CD8-positive, alpha-beta memory T cell (primary cell): ENCODE measurements at regions of chr17 and their contacts with region 1.

Region 1: GRCh38 chr17:45277216-45277849 is 15.4 kb upstream of the SPATA32 start:
- DNase-seq: peak; percentile 76 to 92 (median 83)
- H3K4me3 ChIP-seq: no peak overlapping the region
- H3K4me3 Mint-ChIP-seq: no peak overlapping the region
- H3K27ac ChIP-seq: no peak overlapping the region
- H3K27ac Mint-ChIP-seq: peak overlapping the region in 6 of 8 donors; percentile 0 to 72 (median 38)
- H3K4me1 ChIP-seq: no peaks in the 10 kb centered on the region
- H3K4me1 Mint-ChIP-seq: peaks cover 4 to 16% (median 11%) of the 10 kb centered on the region in 3 donors
- H3K27me3 ChIP-seq: no peaks in the 10 kb centered on the region
- H3K27me3 Mint-ChIP-seq: no peaks in the 10 kb centered on the region

Region 2: DNA sequence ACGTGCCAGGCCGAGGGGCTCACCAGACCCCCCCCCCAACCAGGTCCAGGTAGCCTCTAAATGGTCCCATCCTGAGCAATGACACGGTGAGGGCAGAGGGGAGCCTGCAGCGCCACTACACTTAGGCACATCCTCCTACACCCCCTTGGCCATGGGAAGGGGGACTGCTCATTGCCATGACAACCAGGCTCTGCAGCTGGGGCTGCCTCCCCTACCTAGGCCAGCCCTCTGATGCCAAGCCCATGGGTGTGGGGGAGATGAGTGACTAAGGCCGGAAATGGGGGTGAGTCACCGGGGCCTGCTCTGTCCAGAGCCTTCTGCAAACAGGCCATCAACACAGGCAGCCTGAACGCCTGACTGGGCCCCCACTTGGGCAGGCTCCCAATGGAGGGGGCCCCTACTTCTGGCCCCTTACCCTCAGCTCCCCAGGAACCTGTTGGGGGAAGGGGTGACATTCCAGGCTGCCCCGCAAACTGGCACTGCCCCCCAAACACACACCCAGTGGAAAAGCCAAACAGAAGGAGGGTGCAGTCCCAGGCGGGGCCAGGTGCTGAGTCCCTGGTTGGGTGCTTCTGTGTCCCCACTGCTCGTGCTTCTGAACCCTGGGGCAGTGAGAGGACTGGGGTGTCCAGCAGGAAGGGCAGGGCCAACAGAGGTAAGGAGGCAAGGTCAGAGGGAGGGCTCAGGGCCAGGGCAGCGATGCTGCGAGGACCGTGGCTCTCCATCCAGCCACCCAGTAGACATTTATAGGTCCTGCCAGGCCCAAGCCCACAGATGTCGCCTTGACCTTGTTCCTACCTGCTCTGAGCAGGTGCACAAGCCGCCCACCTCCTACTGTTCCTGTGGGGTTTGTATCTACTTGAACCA is 153.2 kb before region 1 on chr17:
- CTCF ChIA-PET with region 1: no interaction called
- POLR2A ChIA-PET with region 1: no interaction called
- DNase-seq: peak in 1 of 5 donors; percentile 68
- H3K4me3 ChIP-seq: no peak overlapping the region
- H3K4me3 Mint-ChIP-seq: no peak overlapping the region
- H3K27ac ChIP-seq: no peak overlapping the region
- H3K27ac Mint-ChIP-seq: peak overlapping the region in 1 of 8 donors; percentile 55
- H3K4me1 ChIP-seq: no peaks in the 10 kb centered on the region
- H3K4me1 Mint-ChIP-seq: peaks cover 0 to 3% (median 0%) of the 10 kb centered on the region in 3 donors
- H3K27me3 ChIP-seq: no peaks in the 10 kb centered on the region
- H3K27me3 Mint-ChIP-seq: no peaks in the 10 kb centered on the region

Region 3: GRCh38 chr17:45148183-45149036 is 128.9 kb before region 1 on chr17 and contains the start of gene HEXIM1:
- CTCF ChIA-PET with region 1: no interaction called
- POLR2A ChIA-PET with region 1: no interaction called
- DNase-seq: peak; percentile 97 to 100 (median 100)
- H3K4me3 ChIP-seq: peak within 1 kb of the TSS; percentile 91
- H3K4me3 Mint-ChIP-seq: peak within 1 kb of the TSS; percentile 90 to 99 (median 95)
- H3K27ac ChIP-seq: peak within 1 kb of the TSS; percentile 98
- H3K27ac Mint-ChIP-seq: peak within 1 kb of the TSS; percentile 97 to 100 (median 99)
- H3K4me1 ChIP-seq: peaks cover 43% of the 10 kb centered on the region
- H3K4me1 Mint-ChIP-seq: peaks cover 47 to 67% (median 61%) of the 10 kb centered on the region in 3 donors
- H3K27me3 ChIP-seq: no peaks in the 10 kb centered on the region
- H3K27me3 Mint-ChIP-seq: peaks cover 0 to 11% of the 10 kb centered on the region in 2 donors
- total RNA-seq, gene HEXIM1: 48.3 to 51.1 TPM

Region 4: DNA sequence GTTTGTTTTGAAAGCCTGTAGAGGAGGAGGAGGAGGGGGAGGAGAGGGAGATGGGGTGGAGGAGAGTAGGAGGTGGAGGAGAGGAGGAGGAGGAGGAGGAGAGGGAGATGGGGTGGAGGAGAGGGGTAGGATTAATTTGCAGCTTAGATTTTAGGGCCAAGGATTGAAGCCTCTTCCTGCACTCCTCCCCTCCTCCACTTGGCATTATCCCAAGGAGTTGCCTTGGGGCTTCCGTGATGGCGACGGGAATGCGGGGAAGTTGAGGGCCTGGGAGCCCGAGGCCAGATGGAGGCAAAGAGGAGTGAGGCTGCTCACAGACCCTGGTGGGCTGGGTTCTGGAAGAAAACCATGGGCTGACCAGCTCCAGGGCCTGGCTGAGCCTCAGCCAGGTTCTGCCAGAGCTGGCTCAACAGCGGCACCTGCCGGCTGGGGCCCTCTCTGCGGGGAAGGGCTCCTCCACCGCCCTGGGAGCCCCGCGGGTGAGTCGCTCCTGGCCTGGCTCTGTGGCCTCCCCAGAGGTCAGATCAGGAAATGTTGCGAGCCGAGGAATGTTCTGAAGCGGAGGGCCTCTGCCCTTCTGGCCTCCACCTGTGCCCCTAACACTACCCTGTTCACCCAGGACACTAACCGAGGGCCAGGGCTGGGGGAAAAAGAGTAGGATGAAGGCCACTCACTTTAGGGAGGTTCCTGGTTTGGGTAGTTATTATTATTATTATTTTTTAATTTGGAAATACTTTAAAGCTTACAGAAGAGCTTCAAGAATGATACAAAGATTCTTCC is 79.6 kb before region 1 on chr17:
- CTCF ChIA-PET with region 1: no interaction called
- POLR2A ChIA-PET with region 1: no interaction called
- DNase-seq: peak; percentile 74 to 86 (median 83)
- H3K4me3 ChIP-seq: no peak overlapping the region
- H3K4me3 Mint-ChIP-seq: no peak overlapping the region
- H3K27ac ChIP-seq: no peak overlapping the region
- H3K27ac Mint-ChIP-seq: no peak overlapping the region
- H3K4me1 ChIP-seq: no peaks in the 10 kb centered on the region
- H3K4me1 Mint-ChIP-seq: peaks cover 1 to 5% (median 4%) of the 10 kb centered on the region in 3 donors
- H3K27me3 ChIP-seq: no peaks in the 10 kb centered on the region
- H3K27me3 Mint-ChIP-seq: no peaks in the 10 kb centered on the region

Region 5: GRCh38 chr17:45247429-45248131 is 29.8 kb before region 1 on chr17:
- CTCF ChIA-PET with region 1: interaction called, 12 read pairs
- POLR2A ChIA-PET with region 1: interaction called, 3 read pairs
- DNase-seq: peak; percentile 92 to 99 (median 98)
- H3K4me3 ChIP-seq: peak overlapping the region; percentile 69
- H3K4me3 Mint-ChIP-seq: peak overlapping the region; percentile 85 to 94 (median 88)
- H3K27ac ChIP-seq: peak overlapping the region; percentile 90
- H3K27ac Mint-ChIP-seq: peak overlapping the region; percentile 93 to 100 (median 97)
- H3K4me1 ChIP-seq: peaks cover 56% of the 10 kb centered on the region
- H3K4me1 Mint-ChIP-seq: peaks cover 31 to 71% (median 40%) of the 10 kb centered on the region in 3 donors
- H3K27me3 ChIP-seq: no peaks in the 10 kb centered on the region
- H3K27me3 Mint-ChIP-seq: no peaks in the 10 kb centered on the region

Region 6: DNA sequence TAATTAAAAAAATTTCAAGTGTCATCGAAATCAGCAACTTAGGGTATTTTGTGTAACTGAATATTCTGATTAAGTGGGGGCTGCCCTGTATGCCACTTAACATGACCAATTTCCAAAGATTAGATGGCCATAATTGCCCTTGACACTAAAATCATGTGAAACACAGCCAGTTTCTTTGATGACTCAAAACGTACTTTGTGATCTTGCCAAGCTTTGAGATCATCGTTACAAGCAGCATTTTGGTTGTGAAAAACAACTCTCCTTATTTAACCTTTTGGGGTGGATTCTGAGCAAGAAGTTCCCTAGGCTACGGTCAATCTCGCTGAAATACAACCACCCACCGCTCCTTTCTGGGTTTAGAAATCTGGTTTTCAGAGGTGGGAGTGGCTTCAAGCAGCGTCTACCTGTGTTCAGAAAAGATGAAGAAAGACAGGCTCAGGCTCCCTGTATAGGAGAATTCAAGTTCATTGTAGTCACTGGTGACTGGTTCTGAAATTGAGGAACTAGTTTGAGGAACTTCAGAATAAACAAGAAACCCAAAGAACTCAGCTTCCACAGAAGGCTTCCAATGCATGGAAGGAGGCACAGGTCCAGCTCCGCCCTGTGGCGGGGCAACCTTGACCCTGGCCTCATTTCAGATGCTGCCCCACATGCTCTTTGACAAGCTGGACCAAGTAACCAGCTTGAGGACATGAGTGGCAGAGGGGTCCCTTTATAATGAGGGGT is 30.1 kb after region 1 on chr17:
- CTCF ChIA-PET with region 1: interaction called, 42 read pairs
- POLR2A ChIA-PET with region 1: interaction called, 8 read pairs
- DNase-seq: peak in 1 of 5 donors; percentile 29
- H3K4me3 ChIP-seq: no peak overlapping the region
- H3K4me3 Mint-ChIP-seq: peak overlapping the region in 4 of 7 donors; percentile 29 to 60 (median 35)
- H3K27ac ChIP-seq: no peak overlapping the region
- H3K27ac Mint-ChIP-seq: peak overlapping the region in 7 of 8 donors; percentile 43 to 83 (median 78)
- H3K4me1 ChIP-seq: peaks cover 72% of the 10 kb centered on the region
- H3K4me1 Mint-ChIP-seq: peaks cover 73 to 88% (median 86%) of the 10 kb centered on the region in 3 donors
- H3K27me3 ChIP-seq: no peaks in the 10 kb centered on the region
- H3K27me3 Mint-ChIP-seq: no peaks in the 10 kb centered on the region

Region 7: DNA sequence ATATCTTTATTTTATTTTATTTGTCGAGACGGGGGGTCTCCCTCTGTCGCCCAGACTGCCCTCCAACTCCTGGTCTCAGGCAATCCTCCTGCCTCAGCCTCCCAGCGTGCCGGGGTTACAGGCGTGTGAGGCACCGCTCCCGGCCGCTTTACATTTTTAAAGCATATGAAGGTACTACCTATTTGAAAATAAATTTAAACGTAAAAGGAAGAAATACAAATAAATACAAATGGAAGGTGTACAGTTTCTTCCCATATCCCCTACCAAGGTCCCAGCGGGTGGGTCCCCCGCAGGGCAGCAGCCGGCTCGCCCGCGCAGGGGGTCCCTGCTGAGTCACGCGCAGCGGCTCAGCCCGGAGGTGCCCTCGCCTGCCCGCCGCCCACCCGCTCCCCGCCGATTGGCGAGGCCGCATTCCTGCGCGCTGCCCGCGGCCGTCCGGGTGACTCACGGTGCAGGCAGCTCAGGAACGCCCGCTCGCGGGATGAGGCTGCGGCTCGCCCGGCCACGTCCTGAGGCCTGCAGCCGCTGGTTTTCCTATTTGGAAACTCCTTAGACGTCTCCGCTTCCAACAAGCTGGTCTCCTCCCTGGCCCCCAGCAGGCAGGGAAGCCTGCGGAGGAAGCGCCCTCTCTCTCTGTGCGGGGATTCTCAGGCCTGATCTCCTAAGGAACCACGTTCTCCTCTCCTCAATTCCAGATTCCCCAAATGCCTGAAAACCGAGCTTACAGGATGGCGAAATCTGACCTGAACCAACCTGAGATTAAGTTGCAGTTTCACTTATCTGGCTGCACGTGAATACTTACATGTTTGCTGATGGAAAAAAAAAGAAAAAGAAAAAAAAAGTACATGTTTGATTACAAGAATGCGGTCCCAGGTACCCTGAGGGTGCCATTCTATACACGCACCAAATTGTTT is 94.3 kb after region 1 on chr17:
- CTCF ChIA-PET with region 1: interaction called, 12 read pairs
- POLR2A ChIA-PET with region 1: interaction called, 10 read pairs
- DNase-seq: no peak
- H3K4me3 ChIP-seq: no peak overlapping the region
- H3K4me3 Mint-ChIP-seq: peak overlapping the region in 5 of 7 donors; percentile 15 to 71 (median 42)
- H3K27ac ChIP-seq: no peak overlapping the region
- H3K27ac Mint-ChIP-seq: no peak overlapping the region
- H3K4me1 ChIP-seq: no peaks in the 10 kb centered on the region
- H3K4me1 Mint-ChIP-seq: peaks cover 2 to 12% (median 7%) of the 10 kb centered on the region in 3 donors
- H3K27me3 ChIP-seq: no peaks in the 10 kb centered on the region
- H3K27me3 Mint-ChIP-seq: peaks cover 8 to 24% of the 10 kb centered on the region in 2 donors

Region 8: DNA sequence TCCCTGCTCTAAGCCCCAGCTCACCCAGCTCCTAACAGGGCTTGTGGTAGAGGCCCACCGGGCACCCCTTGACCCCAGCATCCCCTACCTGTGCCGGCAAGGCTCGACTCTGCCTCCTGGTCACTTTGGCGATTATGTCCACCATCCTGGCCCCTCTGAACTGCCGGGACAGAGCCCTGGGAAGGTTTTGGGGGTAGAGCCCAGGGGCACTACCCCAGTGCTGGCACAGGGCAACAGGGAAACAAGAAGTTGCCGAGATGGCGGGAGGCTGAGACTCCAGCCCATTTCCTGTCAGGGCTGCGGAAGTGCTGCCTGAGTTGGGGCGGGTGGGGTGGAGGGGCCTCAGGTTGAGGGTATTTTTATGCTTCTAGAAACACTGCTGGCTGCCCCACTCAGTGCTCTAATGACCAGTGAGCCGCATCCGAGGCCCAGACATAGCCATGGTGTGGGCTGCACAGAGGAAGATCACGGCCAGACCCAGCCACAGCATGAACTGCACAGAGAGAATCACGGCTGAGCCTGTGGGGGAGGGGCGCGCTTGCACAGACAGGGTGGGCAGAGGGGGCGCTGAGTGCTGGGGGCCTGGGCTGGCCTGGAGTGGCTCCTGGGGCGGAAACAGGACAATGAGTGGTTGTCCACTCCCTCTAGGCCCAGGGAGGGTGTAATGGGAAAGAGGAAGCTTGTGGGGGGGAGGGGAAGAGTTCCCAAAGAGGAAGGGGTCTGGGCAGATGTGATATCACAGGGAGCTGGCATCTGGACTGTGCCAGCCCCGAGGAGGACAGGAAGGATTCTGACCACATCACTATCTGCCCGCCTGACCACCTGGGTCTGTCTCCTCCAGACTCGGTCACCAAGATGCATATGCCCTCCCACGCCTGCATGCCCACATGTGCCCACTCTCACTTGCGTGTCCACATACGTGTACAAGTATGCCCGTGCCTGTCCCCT is 133.1 kb after region 1 on chr17:
- CTCF ChIA-PET with region 1: interaction called, 12 read pairs
- POLR2A ChIA-PET with region 1: no interaction called
- DNase-seq: peak; percentile 42 to 70 (median 56)
- H3K4me3 ChIP-seq: peak overlapping the region; percentile 100
- H3K4me3 Mint-ChIP-seq: peak overlapping the region; percentile 96 to 100 (median 99)
- H3K27ac ChIP-seq: peak overlapping the region; percentile 84
- H3K27ac Mint-ChIP-seq: peak overlapping the region; percentile 92 to 99 (median 98)
- H3K4me1 ChIP-seq: peaks cover 48% of the 10 kb centered on the region
- H3K4me1 Mint-ChIP-seq: peaks cover 46 to 59% (median 50%) of the 10 kb centered on the region in 3 donors
- H3K27me3 ChIP-seq: no peaks in the 10 kb centered on the region
- H3K27me3 Mint-ChIP-seq: peaks cover 0 to 3% of the 10 kb centered on the region in 2 donors